MCF 10A (cell line): ENCODE measurements at regions of chr3 and their contacts with region 1.

Region 1: DNA sequence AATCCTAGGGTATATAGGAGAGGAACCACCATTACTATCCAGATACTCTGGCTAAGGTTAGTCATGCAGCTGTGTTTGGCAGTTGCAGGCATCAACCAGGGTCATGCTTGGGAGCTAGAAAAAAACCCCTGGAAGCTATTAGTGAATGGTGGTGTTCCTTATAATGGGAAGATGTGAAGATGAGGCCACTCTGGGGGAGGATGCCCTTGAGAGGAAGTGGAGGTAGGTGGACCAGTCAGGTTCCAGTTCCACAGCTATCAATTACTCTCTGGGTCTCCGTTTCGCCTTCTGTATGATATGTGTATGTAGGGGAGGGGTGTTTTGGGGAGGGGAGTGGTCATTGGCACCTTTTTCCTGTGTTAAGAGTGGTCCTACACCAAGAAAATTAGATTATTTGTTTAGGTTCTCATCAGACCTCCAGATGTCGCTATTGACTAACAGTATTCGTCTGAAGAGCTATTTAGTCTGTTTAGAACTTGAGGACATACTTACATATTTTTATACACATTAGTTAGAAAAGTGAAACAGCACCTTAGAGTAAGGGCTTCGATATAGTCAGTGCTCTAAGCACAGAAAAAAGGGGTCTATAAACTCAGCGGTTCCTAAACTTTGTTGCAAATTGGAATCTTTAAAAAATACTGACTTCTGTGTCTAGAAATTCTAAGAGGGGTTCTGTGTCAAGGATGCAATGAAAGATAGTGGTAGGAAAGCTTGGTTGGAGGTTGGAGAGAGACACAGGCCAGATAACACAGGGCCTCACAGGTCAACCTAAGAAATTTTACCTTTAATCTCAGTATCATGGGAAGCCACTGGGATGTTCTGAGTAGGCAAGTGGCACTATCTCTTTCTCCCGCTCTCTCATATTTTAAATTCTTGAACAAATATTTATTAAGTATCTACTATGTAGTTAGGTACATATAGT is 9.1 kb upstream of the HPS3 start:
- DNase-seq: peak; percentile 74
- H3K4me3 Mint-ChIP-seq: no peak overlapping the region
- H3K27ac Mint-ChIP-seq: no peak overlapping the region
- H3K4me1 Mint-ChIP-seq: peaks cover 5% of the 10 kb centered on the region
- H3K27me3 Mint-ChIP-seq: no peaks in the 10 kb centered on the region
- CTCF ChIP-seq: peak; percentile 57

Region 2: DNA sequence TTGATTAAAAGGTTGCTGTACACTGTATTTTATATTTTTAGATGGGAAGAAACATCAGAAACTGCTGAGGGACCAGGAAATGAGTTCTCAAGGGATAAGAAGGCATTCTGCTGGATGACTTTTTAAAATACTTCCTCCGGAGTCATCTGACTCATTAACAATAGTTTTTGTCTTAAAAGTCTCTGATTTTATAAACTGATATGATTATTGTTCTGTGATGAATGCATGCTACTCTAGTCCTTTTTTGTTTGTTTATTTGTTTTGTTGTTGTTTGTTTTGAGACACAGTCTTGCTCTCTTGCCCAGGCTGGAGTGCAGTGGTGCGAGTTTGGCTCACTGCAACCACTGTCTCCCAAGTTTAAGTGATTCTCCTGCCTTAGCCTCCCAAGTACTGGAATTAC is 15.8 kb before region 1 on chr3:
- CTCF ChIA-PET with region 1: interaction called, 16 read pairs
- POLR2A ChIA-PET with region 1: no interaction called
- intact Hi-C with region 1: no loop called
- DNase-seq: no peak
- H3K4me3 Mint-ChIP-seq: no peak overlapping the region
- H3K27ac Mint-ChIP-seq: no peak overlapping the region
- H3K4me1 Mint-ChIP-seq: no peaks in the 10 kb centered on the region
- H3K27me3 Mint-ChIP-seq: no peaks in the 10 kb centered on the region
- CTCF ChIP-seq: no peak

Region 3: GRCh38 chr3:149160754-149161300 is 40.5 kb after region 1 on chr3:
- CTCF ChIA-PET with region 1: interaction called, 11 read pairs
- POLR2A ChIA-PET with region 1: no interaction called
- intact Hi-C with region 1: no loop called
- DNase-seq: no peak
- H3K4me3 Mint-ChIP-seq: no peak overlapping the region
- H3K27ac Mint-ChIP-seq: no peak overlapping the region
- H3K4me1 Mint-ChIP-seq: no peaks in the 10 kb centered on the region
- H3K27me3 Mint-ChIP-seq: no peaks in the 10 kb centered on the region
- CTCF ChIP-seq: no peak

Region 4: DNA sequence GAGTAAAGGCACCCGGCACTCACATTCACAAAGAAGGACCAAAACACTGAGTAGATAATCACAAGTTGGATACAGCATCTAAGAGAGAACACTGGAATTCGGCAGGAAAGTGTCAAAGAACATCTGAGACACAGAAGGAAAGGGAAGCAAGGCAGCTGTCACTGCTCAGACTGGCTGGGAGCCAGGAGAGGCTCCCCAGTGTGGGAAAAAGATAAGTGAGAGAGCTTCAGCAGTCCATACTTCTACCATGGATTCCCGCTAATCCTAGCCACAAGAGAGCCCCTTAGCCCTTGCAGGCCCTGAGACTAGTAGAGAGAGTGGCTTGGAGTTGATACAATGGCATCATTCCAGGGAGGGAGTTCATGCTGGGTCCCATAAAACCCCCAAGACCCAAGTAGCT is 138.0 kb after region 1 on chr3:
- CTCF ChIA-PET with region 1: interaction called, 28 read pairs
- POLR2A ChIA-PET with region 1: no interaction called
- intact Hi-C with region 1: no loop called
- DNase-seq: no peak
- H3K4me3 Mint-ChIP-seq: no peak overlapping the region
- H3K27ac Mint-ChIP-seq: no peak overlapping the region
- H3K4me1 Mint-ChIP-seq: no peaks in the 10 kb centered on the region
- H3K27me3 Mint-ChIP-seq: no peaks in the 10 kb centered on the region
- CTCF ChIP-seq: no peak

Region 5: GRCh38 chr3:149273096-149273751 is 152.9 kb after region 1 on chr3:
- CTCF ChIA-PET with region 1: interaction called, 181 read pairs
- POLR2A ChIA-PET with region 1: interaction called, 3 read pairs
- intact Hi-C with region 1: loop called (anchors 1 kb)
- DNase-seq: peak; percentile 88
- H3K4me3 Mint-ChIP-seq: no peak overlapping the region
- H3K27ac Mint-ChIP-seq: no peak overlapping the region
- H3K4me1 Mint-ChIP-seq: peaks cover 15% of the 10 kb centered on the region
- H3K27me3 Mint-ChIP-seq: no peaks in the 10 kb centered on the region
- CTCF ChIP-seq: peak; percentile 94

Region 6: GRCh38 chr3:149330609-149331331 is 210.5 kb after region 1 on chr3:
- CTCF ChIA-PET with region 1: interaction called, 18 read pairs
- POLR2A ChIA-PET with region 1: no interaction called
- intact Hi-C with region 1: loop called (anchors 1 kb)
- DNase-seq: peak; percentile 29
- H3K4me3 Mint-ChIP-seq: no peak overlapping the region
- H3K27ac Mint-ChIP-seq: no peak overlapping the region
- H3K4me1 Mint-ChIP-seq: no peaks in the 10 kb centered on the region
- H3K27me3 Mint-ChIP-seq: no peaks in the 10 kb centered on the region
- CTCF ChIP-seq: no peak

Region 7: DNA sequence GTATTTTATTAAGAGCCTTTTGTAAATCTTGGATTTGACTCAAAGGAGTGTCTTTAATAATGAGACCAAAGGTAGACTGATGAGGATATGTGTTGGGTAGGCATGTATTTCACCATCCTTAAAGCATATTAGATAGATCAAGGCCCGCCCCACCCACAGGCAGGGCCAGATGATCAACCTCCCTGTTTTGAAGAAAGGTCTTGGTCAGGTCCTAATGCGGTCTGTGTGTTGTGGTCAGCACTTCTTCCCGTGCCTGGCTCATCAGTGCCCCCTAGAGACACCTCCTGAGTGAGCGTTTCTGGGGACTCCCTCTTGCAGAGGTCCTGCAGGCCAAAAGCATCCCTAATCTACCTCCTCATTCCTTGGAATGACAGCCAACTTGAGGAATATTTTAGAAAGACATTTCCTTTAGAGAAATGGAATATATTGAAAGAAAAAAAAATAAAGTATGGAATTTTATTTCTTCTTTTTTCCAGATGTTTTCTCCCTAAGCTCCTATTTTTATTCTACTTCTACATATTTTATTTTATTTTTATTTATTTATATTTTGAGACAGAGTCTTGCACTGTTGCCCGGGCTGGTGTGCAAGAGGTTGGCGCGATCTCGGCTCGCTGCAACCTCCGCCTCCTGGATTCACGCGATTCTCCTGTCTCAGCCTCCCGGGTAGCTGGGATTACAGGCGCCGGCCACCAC is 360.2 kb after region 1 on chr3:
- CTCF ChIA-PET with region 1: interaction called, 6 read pairs
- POLR2A ChIA-PET with region 1: no interaction called
- intact Hi-C with region 1: loop called (anchors 5 kb)
- DNase-seq: peak; percentile 88
- H3K4me3 Mint-ChIP-seq: no peak overlapping the region
- H3K27ac Mint-ChIP-seq: no peak overlapping the region
- H3K4me1 Mint-ChIP-seq: no peaks in the 10 kb centered on the region
- H3K27me3 Mint-ChIP-seq: no peaks in the 10 kb centered on the region
- CTCF ChIP-seq: peak; percentile 88